ENCODE measurements at regions of chr22 and their contacts with region 1.

Region 1: GRCh38 chr22:46542011-46542985 is 4.9 kb upstream of the CELSR1 start:
- DNase-seq: peak; percentile 97
- H3K4me3 ChIP-seq: no peak overlapping the region
- H3K27ac ChIP-seq: no peak overlapping the region
- H3K4me1 ChIP-seq: peaks cover 10% of the 10 kb centered on the region in 2 experiments; a peak in 3 of 4 replicates
- H3K27me3 ChIP-seq: peaks cover 8% of the 10 kb centered on the region; the same call in 1 of the 2 replicates
- CTCF ChIP-seq: peak; percentile 89
- EP300 ChIP-seq: no peak
- RAD21 ChIP-seq: peak; percentile 96

Region 2: GRCh38 chr22:46036558-46037408 is 505.5 kb before region 1 on chr22:
- CTCF ChIA-PET with region 1: no interaction called
- POLR2A ChIA-PET with region 1: no interaction called
- DNase-seq: peak; percentile 69
- H3K4me3 ChIP-seq: peak overlapping the region; percentile 88 to 91
- H3K27ac ChIP-seq: peak overlapping the region; percentile 89 to 95
- H3K4me1 ChIP-seq: peaks cover 0 to 42% of the 10 kb centered on the region in 2 experiments; a peak in 3 of 4 replicates
- H3K27me3 ChIP-seq: no peaks in the 10 kb centered on the region
- CTCF ChIP-seq: peak; percentile 45
- EP300 ChIP-seq: no peak
- RAD21 ChIP-seq: peak; percentile 67

Region 3: GRCh38 chr22:46335201-46336118 is 206.8 kb before region 1 on chr22 and contains the start of gene TRMU:
- CTCF ChIA-PET with region 1: interaction called, 14 read pairs
- POLR2A ChIA-PET with region 1: no interaction called
- DNase-seq: peak; percentile 98
- H3K4me3 ChIP-seq: peak within 1 kb of the TSS; percentile 95 to 96
- H3K27ac ChIP-seq: peak within 1 kb of the TSS; percentile 80 to 87
- H3K4me1 ChIP-seq: peaks cover 6 to 15% of the 10 kb centered on the region in 2 experiments; a peak in 3 of 4 replicates
- H3K27me3 ChIP-seq: no peaks in the 10 kb centered on the region
- CTCF ChIP-seq: no peak
- EP300 ChIP-seq: no peak; a peak in 1 of 4 replicates
- RAD21 ChIP-seq: no peak
- polyA plus RNA-seq, gene TRMU: 47.1 and 47.4 TPM in 2 replicates

Region 4: GRCh38 chr22:46355371-46355995 is 186.8 kb before region 1 on chr22:
- CTCF ChIA-PET with region 1: interaction called, 70 read pairs
- POLR2A ChIA-PET with region 1: interaction called, 3 read pairs
- DNase-seq: peak; percentile 92
- H3K4me3 ChIP-seq: no peak overlapping the region; a peak in 1 of 4 replicates
- H3K27ac ChIP-seq: no peak overlapping the region
- H3K4me1 ChIP-seq: no peaks in the 10 kb centered on the region
- H3K27me3 ChIP-seq: no peaks in the 10 kb centered on the region
- CTCF ChIP-seq: peak; percentile 78
- EP300 ChIP-seq: no peak
- RAD21 ChIP-seq: peak; percentile 81

Region 5: GRCh38 chr22:46367707-46368191 is 174.5 kb before region 1 on chr22:
- CTCF ChIA-PET with region 1: interaction called, 105 read pairs
- POLR2A ChIA-PET with region 1: no interaction called
- DNase-seq: peak; percentile 87
- H3K4me3 ChIP-seq: no peak overlapping the region
- H3K27ac ChIP-seq: no peak overlapping the region
- H3K4me1 ChIP-seq: no peaks in the 10 kb centered on the region; a peak in 1 of 4 replicates
- H3K27me3 ChIP-seq: no peaks in the 10 kb centered on the region
- CTCF ChIP-seq: peak; percentile 73
- EP300 ChIP-seq: no peak
- RAD21 ChIP-seq: peak; percentile 66

Region 6: DNA sequence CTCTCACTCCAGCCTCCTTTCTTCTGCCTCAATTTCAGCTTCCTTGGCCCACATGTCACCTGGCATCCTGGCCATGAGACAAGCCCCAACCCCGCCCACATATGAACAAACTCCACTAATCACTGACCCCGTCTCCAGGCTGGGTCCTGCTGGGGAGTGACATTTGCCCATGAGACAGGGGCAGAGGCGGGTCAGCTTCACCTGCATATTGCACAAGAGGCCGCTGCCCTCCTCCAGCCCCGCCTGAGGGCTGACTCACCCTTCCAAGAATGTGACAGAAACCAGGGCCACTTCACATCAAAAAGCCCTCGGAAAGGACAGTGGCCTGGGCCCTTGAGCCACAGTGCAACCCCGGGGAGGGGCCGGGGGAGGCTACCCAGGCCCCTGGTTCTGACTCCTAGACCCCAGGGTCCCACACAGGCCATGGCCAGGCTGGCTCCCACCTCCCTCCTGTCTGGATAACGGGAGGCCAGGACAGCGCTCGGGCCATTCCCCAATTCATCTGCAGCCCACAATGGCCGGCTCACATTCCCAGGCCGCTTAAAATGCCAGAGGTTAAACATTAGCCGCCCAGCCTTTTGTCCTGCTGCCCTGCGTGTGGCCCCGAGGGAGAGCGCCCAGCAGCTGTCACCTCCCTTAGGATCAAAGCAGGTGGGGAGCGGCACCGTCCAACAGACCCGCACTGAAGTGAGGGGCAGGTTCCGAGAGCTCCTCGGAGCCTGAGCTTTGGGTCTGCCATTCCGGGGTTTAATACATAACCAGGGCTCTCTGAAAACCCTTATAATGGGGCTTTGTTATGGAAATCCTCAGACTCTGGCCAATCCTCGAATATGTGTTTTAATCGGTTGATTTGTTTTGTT is 164.5 kb before region 1 on chr22:
- CTCF ChIA-PET with region 1: interaction called, 12 read pairs
- POLR2A ChIA-PET with region 1: no interaction called
- DNase-seq: no peak
- H3K4me3 ChIP-seq: no peak overlapping the region
- H3K27ac ChIP-seq: no peak overlapping the region
- H3K4me1 ChIP-seq: no peaks in the 10 kb centered on the region; a peak in 1 of 4 replicates
- H3K27me3 ChIP-seq: no peaks in the 10 kb centered on the region
- CTCF ChIP-seq: no peak
- EP300 ChIP-seq: no peak
- RAD21 ChIP-seq: no peak

Region 7: DNA sequence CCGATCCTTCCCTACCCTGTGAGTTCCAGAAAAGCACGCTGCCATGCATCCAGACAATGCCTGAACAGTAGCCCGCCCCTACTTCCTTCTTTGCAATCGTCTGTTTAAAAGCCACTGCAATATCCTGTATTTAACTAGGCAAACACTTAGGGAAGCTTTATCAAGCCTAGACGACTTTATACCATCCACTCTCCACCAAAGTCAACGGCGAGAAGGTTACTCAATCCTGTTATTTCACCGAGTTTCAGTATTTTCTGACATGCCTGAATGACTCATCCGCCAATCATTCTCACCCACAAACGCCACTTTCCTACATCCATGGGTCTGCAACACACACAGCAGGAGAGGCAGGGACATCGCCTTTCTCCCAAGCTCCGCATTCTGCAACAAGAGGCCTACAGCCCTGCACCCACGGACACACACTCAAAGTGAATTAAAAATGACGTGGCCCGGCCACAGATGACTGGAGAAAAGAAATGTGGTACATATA is 14.1 kb before region 1 on chr22:
- CTCF ChIA-PET with region 1: interaction called, 26 read pairs
- POLR2A ChIA-PET with region 1: no interaction called
- DNase-seq: no peak
- H3K4me3 ChIP-seq: no peak overlapping the region
- H3K27ac ChIP-seq: no peak overlapping the region
- H3K4me1 ChIP-seq: peaks cover 0 to 2% of the 10 kb centered on the region in 2 experiments; a peak in 1 of 4 replicates
- H3K27me3 ChIP-seq: no peaks in the 10 kb centered on the region
- CTCF ChIP-seq: no peak
- EP300 ChIP-seq: no peak
- RAD21 ChIP-seq: no peak

Region 8: GRCh38 chr22:46557736-46558480 is 15.6 kb after region 1 on chr22:
- CTCF ChIA-PET with region 1: interaction called, 31 read pairs
- POLR2A ChIA-PET with region 1: interaction called, 4 read pairs
- DNase-seq: no peak
- H3K4me3 ChIP-seq: no peak overlapping the region
- H3K27ac ChIP-seq: no peak overlapping the region
- H3K4me1 ChIP-seq: no peaks in the 10 kb centered on the region; a peak in 1 of 4 replicates
- H3K27me3 ChIP-seq: no peaks in the 10 kb centered on the region
- CTCF ChIP-seq: no peak
- EP300 ChIP-seq: no peak
- RAD21 ChIP-seq: no peak

Measured in SK-N-SH (cell line).